Activated CD8-positive, alpha-beta memory T cell treated with anti-CD3 and anti-CD28 coated beads, Interleukin-2, amount 10 ng/mL, durations not matched to agents 7 days and 5 days (primary cell): ENCODE measurements at regions of chr11 and their contacts with region 1.

Region 1: DNA sequence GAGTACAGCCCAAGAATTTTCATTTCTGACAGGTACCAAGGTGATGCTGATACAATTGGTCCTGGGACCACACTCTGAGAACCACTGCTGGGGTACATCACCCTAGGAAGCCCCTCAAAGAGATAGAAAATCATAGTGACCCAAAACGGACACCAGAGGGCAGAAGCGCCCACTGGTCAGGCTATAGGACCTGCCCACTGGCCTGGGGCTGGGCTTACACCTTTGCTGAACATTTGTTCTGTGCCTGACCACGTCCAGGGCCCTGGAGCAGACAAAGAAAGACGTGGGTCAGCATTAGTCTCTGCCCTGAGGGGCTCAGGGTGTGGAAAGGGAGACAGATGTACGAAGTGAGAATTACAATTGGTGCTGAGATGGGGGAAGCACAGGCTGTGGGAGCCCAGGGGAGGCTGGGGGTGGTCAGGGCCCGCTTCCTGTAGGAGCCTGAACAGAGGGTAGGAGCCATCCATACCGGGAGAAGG is 14.4 kb upstream of the SERPINH1 start:
- DNase-seq: peak; percentile 56
- ATAC-seq: peak; percentile 67
- H3K4me3 Mint-ChIP-seq: no peak overlapping the region
- H3K27ac Mint-ChIP-seq: no peak overlapping the region
- H3K4me1 Mint-ChIP-seq: peaks cover 8% of the 10 kb centered on the region
- H3K27me3 Mint-ChIP-seq: peaks cover 11% of the 10 kb centered on the region

Region 2: DNA sequence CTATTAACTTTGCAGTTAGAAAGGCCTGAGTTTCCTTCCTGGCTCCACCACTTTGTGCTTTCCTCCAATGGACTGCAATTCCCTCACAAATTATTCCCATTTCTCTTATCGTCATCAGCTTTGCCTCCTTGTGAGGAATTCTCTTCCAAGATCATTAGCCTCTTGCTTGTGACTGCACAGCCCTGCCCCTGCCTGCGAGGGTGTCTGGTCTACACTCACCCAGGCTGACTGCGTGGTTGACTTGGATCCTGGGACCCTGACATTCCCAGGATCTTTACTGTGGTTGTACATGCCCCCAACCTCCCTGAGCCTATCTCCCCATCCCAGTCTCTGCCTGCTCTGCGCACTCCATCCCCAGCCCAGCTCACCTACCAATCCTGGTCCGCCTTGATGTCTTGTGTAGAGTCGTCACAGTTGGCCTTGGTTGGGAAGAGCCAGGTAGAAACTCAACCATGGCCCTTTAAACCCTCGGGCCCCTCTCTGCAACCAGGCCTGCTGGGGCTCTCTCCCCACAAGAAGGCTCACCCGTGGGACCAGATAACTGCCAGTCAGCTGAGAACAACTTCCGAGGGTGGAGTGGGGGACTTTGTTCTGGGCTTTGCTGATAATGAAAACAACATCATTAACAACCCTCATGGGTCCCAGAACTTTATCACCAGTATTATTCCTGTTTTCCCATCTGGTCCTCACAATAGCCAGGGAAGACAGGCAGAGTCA is 451.0 kb before region 1 on chr11 and contains the start of gene OR2AT4:
- CTCF ChIA-PET with region 1: no interaction called
- DNase-seq: no peak
- ATAC-seq: no peak
- H3K4me3 Mint-ChIP-seq: no peak within 1 kb of the TSS
- H3K27ac Mint-ChIP-seq: no peak within 1 kb of the TSS
- H3K4me1 Mint-ChIP-seq: peaks cover 12% of the 10 kb centered on the region
- H3K27me3 Mint-ChIP-seq: peaks cover 55% of the 10 kb centered on the region
- total RNA-seq, gene OR2AT4: not detected

Region 3: DNA sequence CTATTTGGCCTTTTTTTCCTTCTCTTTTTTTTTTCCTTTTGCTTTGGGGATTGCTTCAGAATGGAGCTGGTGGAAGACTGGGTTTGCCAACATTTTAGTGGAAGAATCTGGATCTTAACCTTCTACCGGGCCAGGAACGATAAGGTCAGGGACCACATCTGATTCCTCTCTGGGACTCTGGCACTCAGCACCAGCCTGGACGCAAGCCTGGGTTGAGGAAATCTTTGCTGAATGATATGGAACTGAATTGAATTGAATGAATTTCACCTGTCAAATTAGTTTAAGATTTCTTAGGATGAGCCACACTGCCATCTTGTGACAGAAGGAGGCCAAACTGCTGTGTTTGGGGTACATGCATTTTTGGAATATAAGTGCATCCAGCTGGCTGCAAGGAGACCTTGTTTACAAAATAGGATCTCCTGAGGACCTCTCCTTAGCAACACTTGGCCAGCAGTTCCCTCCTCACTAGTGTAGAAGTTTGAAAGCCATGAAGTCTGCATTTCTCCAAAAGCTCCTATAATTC is 276.7 kb before region 1 on chr11:
- CTCF ChIA-PET with region 1: no interaction called
- DNase-seq: no peak
- ATAC-seq: no peak
- H3K4me3 Mint-ChIP-seq: no peak overlapping the region
- H3K27ac Mint-ChIP-seq: no peak overlapping the region
- H3K4me1 Mint-ChIP-seq: peaks cover 14% of the 10 kb centered on the region
- H3K27me3 Mint-ChIP-seq: no peaks in the 10 kb centered on the region

Region 4: GRCh38 chr11:75577207-75577606 is 29.6 kb after region 1 on chr11:
- CTCF ChIA-PET with region 1: interaction called, 15 read pairs
- DNase-seq: peak; percentile 56
- ATAC-seq: no peak
- H3K4me3 Mint-ChIP-seq: no peak overlapping the region
- H3K27ac Mint-ChIP-seq: no peak overlapping the region
- H3K4me1 Mint-ChIP-seq: peaks cover 21% of the 10 kb centered on the region
- H3K27me3 Mint-ChIP-seq: peaks cover 7% of the 10 kb centered on the region